ENCODE measurements at regions of chr4 and their contacts with region 1.

Region 1: DNA sequence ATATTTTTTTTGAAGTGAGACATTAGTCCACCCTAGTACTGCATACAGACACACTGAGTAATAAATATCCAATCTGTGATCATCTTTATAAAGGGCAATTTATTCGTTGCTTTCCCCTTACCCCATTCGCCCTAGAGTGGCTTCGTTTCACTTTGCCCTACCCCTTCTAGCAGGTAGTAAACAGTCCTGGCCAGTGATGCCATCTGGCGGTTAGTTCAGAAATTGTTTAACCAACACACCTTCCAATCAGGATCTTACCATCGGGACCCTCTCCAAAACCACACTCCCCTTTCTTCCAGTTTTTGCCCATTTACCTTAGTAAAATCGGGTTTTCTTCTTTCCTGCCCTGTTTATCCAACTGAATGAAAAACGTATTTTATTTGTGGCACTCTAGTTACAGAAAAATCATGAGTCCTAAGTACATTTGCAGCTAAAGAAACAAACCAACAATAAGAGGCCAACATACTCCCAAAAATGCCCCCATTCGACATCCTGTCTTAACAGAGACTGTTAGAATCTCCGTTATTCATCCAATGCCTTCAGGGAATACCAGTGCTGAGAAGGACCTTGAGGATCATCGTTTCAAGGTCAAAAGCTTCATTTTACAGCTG is 2.2 kb downstream of the PPA2 start:
- DNase-seq: peak; percentile 64
- H3K4me3 Mint-ChIP-seq: peak overlapping the region; percentile 78
- H3K27ac Mint-ChIP-seq: no peak overlapping the region
- H3K4me1 Mint-ChIP-seq: peaks cover 49% of the 10 kb centered on the region
- H3K27me3 Mint-ChIP-seq: peaks cover 2% of the 10 kb centered on the region

Region 2: DNA sequence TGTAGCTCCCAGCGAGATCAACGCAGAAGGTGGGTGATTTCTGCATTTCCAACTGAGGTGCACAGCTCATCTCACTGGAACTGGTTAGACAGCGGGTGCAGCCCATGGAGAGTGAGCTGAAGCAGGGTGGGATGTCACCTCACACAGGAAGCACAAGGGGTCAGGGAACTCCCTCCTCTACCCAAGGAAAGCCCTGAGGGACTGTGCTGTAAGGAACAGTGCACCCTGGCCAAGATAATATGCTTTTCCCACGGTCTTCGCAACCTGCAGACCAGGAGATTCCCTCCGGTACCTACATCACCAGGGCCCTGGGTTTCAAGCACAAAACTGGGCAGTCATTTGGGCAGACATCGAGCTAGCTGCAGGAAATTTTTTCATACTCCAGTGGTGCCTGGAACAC is 541.4 kb before region 1 on chr4:
- intact Hi-C with region 1: loop called (anchors 1 kb)
- DNase-seq: no peak
- H3K4me3 Mint-ChIP-seq: no peak overlapping the region
- H3K27ac Mint-ChIP-seq: no peak overlapping the region
- H3K4me1 Mint-ChIP-seq: peaks cover 46% of the 10 kb centered on the region
- H3K27me3 Mint-ChIP-seq: peaks cover 4% of the 10 kb centered on the region

Region 3: GRCh38 chr4:105140684-105141490 is 330.8 kb before region 1 on chr4:
- intact Hi-C with region 1: loop called (anchors 1 kb)
- DNase-seq: no peak
- H3K4me3 Mint-ChIP-seq: no peak overlapping the region
- H3K27ac Mint-ChIP-seq: no peak overlapping the region
- H3K4me1 Mint-ChIP-seq: peaks cover 21% of the 10 kb centered on the region
- H3K27me3 Mint-ChIP-seq: no peaks in the 10 kb centered on the region

Region 4: GRCh38 chr4:105215609-105216313 is 255.9 kb before region 1 on chr4:
- intact Hi-C with region 1: loop called (anchors 1 kb)
- DNase-seq: no peak
- H3K4me3 Mint-ChIP-seq: peak overlapping the region; percentile 23
- H3K27ac Mint-ChIP-seq: peak overlapping the region; percentile 46
- H3K4me1 Mint-ChIP-seq: peaks cover 20% of the 10 kb centered on the region
- H3K27me3 Mint-ChIP-seq: no peaks in the 10 kb centered on the region

Region 5: GRCh38 chr4:105453550-105454205 is 18.0 kb before region 1 on chr4:
- intact Hi-C with region 1: loop called (anchors 1 kb)
- DNase-seq: no peak
- H3K4me3 Mint-ChIP-seq: no peak overlapping the region
- H3K27ac Mint-ChIP-seq: peak overlapping the region; percentile 45
- H3K4me1 Mint-ChIP-seq: peaks cover 33% of the 10 kb centered on the region
- H3K27me3 Mint-ChIP-seq: no peaks in the 10 kb centered on the region

Measured in activated T-helper 1 cell treated with anti-CD3 and anti-CD28 coated beads, Interleukin-12 subunit alpha, Interleukin-12 subunit beta, Interleukin-2, Interleukin-4 antibody, amounts not matched to agents 30 ng/mL and 10 ng/mL and 1 ng/mL, durations not matched to agents 14 hours and 24 hours and 36 hours (primary cell).